ENCODE measurements at regions of chr9 and their contacts with region 1.

Region 1: DNA sequence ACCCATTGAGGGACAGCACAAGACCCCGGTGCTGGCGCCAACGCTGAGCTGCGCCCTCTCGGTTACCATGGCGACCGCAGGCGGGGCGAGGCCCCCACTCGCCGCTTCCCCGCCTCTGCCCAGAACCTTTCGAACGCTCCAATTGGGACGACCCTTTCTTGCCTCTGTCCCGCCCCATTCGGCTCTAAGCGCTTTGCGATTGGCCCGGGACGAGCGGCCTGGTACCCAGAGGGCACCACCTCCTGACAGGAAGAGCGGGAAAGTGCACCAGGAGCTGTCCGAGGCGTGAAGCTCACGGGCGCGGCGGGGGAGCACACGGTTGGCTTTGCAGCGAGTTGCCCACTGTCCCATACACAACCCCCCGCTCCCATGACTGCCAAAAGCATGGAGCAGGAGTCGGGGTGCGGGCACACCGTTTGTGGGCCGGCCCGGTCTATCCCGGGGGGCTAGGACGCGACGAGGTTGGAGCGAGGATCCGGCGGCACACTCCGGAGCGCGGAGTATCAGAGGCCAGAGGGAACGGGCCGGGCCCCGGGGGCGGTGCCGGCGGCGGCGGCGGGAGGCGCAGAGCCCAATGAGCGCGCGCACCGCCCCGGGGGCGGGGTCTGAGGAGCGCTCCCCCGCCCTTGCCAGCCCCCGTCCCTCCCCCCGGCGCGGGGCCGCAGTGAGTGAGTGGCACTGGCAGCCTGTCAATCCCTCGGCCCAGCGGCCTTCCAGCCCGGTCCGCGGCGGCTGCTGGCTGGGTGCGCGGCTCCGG is 978 bp upstream of the PBX3 start:
- DNase-seq: peak; percentile 95 to 98 (median 96)
- H3K4me3 ChIP-seq: peak overlapping the region in 2 of 4 donors; percentile 36 to 80
- H3K27ac ChIP-seq: peak overlapping the region; percentile 37 to 91 (median 77)
- H3K4me1 ChIP-seq: peaks cover 11 to 27% of the 10 kb centered on the region in 2 donors
- H3K27me3 ChIP-seq: no peaks in the 10 kb centered on the region
- CTCF ChIP-seq: no peak
- POLR2A ChIP-seq: peak in 1 of 2 donors; percentile 77

Region 2: DNA sequence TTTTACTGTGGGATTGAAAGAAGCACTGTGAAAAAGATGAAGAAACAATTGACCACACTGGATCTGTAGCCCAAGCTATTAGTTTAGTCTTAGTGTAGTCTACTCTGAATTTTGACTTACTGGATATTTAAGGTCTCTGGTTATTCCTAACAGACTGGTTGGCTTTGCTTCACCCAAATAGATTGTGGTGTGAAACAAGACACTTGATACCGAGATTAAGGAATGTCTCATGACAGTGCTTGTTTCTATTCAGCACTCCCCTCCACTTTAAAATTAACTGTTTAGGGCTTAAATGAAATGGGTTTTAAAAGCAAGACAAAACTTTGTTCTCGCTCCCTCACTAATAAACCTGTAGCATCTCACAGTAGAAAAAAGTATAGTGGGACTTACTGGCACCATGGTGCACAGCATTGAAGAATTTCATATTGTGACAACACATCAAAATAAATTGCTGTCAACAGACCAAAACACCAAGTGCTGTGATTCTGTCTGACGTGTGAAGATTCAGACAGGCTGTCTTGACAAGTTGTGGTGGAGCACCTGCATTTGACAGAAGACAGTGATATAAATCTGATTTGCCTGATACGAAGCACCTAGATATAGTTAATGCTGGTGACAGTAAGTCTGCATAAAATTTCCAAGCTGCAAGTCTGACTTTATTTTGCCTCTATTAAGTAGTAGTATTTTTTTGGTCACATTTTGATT is 74.1 kb after region 1 on chr9:
- intact Hi-C with region 1: loop called in 1 of 2 experiments (anchors 5 kb)
- DNase-seq: no peak
- H3K4me3 ChIP-seq: no peak overlapping the region
- H3K27ac ChIP-seq: peak overlapping the region in 3 of 5 donors; percentile 11 to 47 (median 20)
- H3K4me1 ChIP-seq: peaks cover 10 to 34% of the 10 kb centered on the region in 2 donors
- H3K27me3 ChIP-seq: no peaks in the 10 kb centered on the region
- CTCF ChIP-seq: no peak
- POLR2A ChIP-seq: no peak

Measured in adrenal gland (tissue), 19 donors.